Mammary epithelial cell (primary cell): ENCODE measurements at regions of chr18 and their contacts with region 1.

Region 1: GRCh38 chr18:42242758-42243157 is 287.7 kb downstream of the PIK3C3 start:
- DNase-seq: no peak
- H3K4me3 ChIP-seq: no peak overlapping the region
- H3K27ac ChIP-seq: no peak overlapping the region
- H3K4me1 ChIP-seq: no peaks in the 10 kb centered on the region
- H3K27me3 ChIP-seq: no peaks in the 10 kb centered on the region
- CTCF ChIP-seq: no peak

Region 2: DNA sequence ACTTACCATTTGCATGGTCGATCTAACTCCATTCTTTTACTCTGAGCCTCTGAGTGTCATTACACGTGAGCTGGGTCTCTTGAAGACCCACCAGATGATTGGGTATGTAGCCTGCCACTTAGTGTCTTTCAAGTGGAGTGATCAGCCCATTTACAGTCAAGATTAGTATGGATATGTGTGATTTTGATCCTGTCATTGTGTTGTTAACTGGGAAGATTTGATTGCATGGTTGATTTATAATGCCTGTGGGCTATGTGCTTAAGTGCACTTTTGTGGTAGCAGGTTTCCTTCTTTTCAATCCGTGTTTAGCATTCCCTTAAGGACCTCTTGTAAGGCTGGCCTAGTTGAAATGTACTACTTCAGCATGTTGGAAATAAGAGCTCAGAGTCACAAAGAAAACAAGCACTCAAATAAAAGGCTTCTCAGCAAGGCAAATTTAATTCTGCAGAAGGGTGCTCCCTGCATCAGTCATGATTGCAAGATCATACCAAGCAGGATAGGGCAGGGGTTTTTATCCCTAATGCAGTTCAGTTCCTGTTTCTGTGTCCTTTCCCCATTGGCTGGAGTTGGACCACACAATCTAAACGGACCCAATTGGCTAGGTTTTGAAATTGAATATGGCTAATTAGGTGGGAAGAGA is 1265.2 kb after region 1 on chr18:
- CTCF ChIA-PET with region 1: no interaction called
- dilution Hi-C with region 1: no loop called
- in situ Hi-C with region 1: no loop called
- intact Hi-C with region 1: loop called (anchors 5 kb)
- DNase-seq: no peak
- H3K4me3 ChIP-seq: no peak overlapping the region
- H3K27ac ChIP-seq: no peak overlapping the region
- H3K4me1 ChIP-seq: no peaks in the 10 kb centered on the region
- H3K27me3 ChIP-seq: no peaks in the 10 kb centered on the region
- CTCF ChIP-seq: no peak